Heart right ventricle (tissue), 16 donors: ENCODE measurements at regions of chr9 and their contacts with region 1.

Region 1: GRCh38 chr9:76255781-76256455 is 138.3 kb downstream of the RFK start:
- DNase-seq: peak; percentile 22 to 66
- ATAC-seq: peak; percentile 77 to 97 (median 92)
- H3K4me3 ChIP-seq: peak overlapping the region in 6 of 10 donors; percentile 6 to 25 (median 12)
- H3K27ac ChIP-seq: peak overlapping the region in 8 of 10 donors; percentile 13 to 72 (median 44)
- H3K4me1 ChIP-seq: peaks cover 0 to 11% (median 5%) of the 10 kb centered on the region in 9 donors
- H3K27me3 ChIP-seq: no peaks in the 10 kb centered on the region
- CTCF ChIP-seq: no peak

Region 2: DNA sequence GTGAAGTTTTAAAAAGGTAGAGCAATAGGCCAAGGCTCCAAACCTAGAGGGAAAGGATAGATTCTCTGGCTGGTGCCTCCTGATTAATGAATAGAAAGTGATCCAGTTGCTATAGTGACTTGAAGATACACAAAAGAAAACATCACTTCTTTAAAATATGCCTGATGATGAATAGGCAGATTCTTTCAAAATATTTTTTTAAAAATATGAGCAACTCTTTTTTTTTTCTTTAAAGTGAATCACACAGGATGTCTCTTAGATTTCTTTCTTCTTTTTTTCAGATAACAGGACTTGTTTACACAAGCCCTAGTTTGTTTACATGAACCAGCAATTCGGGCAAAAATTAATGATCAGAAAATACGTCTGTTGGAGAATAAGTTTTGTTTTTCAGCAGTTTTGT is 13.9 kb after region 1 on chr9:
- intact Hi-C with region 1: no loop called
- DNase-seq: no peak
- ATAC-seq: no peak
- H3K4me3 ChIP-seq: no peak overlapping the region
- H3K27ac ChIP-seq: peak overlapping the region in 2 of 10 donors; percentile 3 to 22
- H3K4me1 ChIP-seq: no peaks in the 10 kb centered on the region
- H3K27me3 ChIP-seq: no peaks in the 10 kb centered on the region
- CTCF ChIP-seq: no peak

Region 3: GRCh38 chr9:76292246-76292645 is 36.3 kb after region 1 on chr9:
- intact Hi-C with region 1: loop called in 1 of 10 experiments (anchors 2 kb)
- DNase-seq: no peak
- ATAC-seq: peak in 5 of 8 donors; percentile 34 to 78 (median 53)
- H3K4me3 ChIP-seq: peak overlapping the region in 6 of 10 donors; percentile 1 to 18 (median 13)
- H3K27ac ChIP-seq: peak overlapping the region in 3 of 10 donors; percentile 29 to 62 (median 30)
- H3K4me1 ChIP-seq: peaks cover 0 to 13% (median 0%) of the 10 kb centered on the region in 9 donors
- H3K27me3 ChIP-seq: peaks cover 0 to 8% (median 0%) of the 10 kb centered on the region in 7 donors
- CTCF ChIP-seq: no peak